Activated naive CD4-positive, alpha-beta T cell treated with anti-CD3 and anti-CD28 coated beads for 36 hours (primary cell): ENCODE measurements at regions of chr1 and their contacts with region 1.

Region 1: GRCh38 chr1:161098210-161099068 is at the start of gene KLHDC9:
- DNase-seq: peak; percentile 78
- H3K4me3 Mint-ChIP-seq: peak within 1 kb of the TSS; percentile 70
- H3K27ac Mint-ChIP-seq: peak within 1 kb of the TSS; percentile 54
- H3K4me1 Mint-ChIP-seq: peaks cover 39% of the 10 kb centered on the region
- H3K27me3 Mint-ChIP-seq: no peaks in the 10 kb centered on the region
- total RNA-seq, gene KLHDC9: 0.33 to 0.57 TPM

Region 2: DNA sequence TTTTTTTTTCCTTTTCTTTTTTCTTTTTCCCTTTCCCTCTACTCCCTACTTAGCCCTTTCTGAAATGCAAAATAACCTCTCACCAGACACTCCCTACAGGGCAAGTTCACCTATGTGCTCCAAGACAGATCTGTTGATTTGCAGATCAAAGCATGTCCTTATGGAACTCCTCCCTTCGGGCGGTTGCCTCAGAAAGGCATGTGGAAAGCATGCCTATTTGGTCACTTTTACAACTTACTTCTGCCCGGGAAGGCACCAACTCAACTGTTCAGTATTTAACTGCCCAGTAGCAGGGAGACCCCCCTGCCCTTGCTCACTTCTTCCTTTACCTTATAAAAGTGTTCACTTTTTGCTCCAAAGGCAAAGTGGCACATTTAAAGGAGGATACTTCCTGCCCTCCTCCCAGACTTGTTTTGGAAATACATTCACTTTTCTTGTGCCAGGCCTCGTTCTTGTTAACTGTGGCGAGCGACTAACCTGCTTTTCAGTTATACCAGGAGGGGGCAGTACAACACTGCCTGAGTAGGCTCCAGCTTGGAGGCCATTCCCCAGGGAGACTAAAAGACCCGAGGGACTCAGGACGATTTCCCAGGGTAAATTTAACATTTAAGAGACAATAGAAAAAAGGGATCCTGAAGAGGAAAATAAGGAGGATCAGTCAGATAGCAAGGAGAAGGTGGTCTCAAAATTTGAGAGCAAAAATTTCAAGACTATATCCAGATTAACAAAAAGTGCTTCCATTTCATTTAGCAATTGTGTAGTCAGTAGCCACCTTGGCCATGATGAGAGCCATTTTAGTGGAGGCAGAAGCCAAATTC is 371.7 kb before region 1 on chr1:
- CTCF ChIA-PET with region 1: interaction called, 3 read pairs
- intact Hi-C with region 1: loop called (anchors 5 kb)
- DNase-seq: peak; percentile 81
- H3K4me3 Mint-ChIP-seq: no peak overlapping the region
- H3K27ac Mint-ChIP-seq: no peak overlapping the region
- H3K4me1 Mint-ChIP-seq: peaks cover 34% of the 10 kb centered on the region
- H3K27me3 Mint-ChIP-seq: no peaks in the 10 kb centered on the region

Region 3: GRCh38 chr1:160997323-160998038 is 101.0 kb before region 1 on chr1:
- CTCF ChIA-PET with region 1: interaction called, 99 read pairs
- intact Hi-C with region 1: loop called (anchors 1 kb)
- DNase-seq: peak; percentile 77
- H3K4me3 Mint-ChIP-seq: no peak overlapping the region
- H3K27ac Mint-ChIP-seq: peak overlapping the region; percentile 1
- H3K4me1 Mint-ChIP-seq: peaks cover 6% of the 10 kb centered on the region
- H3K27me3 Mint-ChIP-seq: no peaks in the 10 kb centered on the region

Region 4: DNA sequence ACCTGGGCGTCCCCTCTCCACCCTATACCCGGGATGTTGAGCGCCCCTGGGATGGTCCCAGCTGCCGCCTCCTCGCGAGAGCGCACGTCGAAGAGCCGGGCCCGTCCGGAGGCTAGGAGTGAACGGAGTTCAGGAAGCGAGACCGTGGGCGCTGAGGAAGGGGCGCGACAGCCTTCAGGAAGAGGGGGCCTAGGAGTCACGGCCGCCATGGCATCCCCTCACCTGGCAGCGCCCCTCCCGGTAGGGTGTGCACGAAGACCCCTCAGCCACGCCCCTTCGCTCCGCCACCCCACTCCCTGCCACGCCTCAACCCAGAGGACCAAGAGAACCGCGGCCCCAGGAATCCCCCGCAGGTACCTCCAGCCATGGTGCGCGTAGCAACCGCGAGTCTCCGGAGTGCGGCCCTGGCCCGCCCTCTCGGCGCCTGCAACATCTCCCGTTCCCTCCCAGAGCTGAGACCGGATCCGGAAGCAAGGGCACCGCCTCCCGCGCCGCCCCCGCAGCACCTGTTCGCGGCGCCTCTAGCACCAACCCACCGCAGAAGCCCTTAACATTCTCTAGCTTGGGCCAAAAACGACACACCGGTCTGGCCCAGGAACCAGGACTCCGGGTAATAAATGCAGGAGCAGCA is 59.8 kb before region 1 on chr1 and contains the start of gene TSTD1:
- CTCF ChIA-PET with region 1: interaction called, 135 read pairs
- intact Hi-C with region 1: loop called (anchors 1 kb)
- DNase-seq: peak; percentile 92
- H3K4me3 Mint-ChIP-seq: peak within 1 kb of the TSS; percentile 88
- H3K27ac Mint-ChIP-seq: peak within 1 kb of the TSS; percentile 77
- H3K4me1 Mint-ChIP-seq: peaks cover 36% of the 10 kb centered on the region
- H3K27me3 Mint-ChIP-seq: no peaks in the 10 kb centered on the region
- total RNA-seq, gene TSTD1: 50.3 to 51.5 TPM

Region 5: GRCh38 chr1:161059293-161059692 is 39.1 kb before region 1 on chr1:
- CTCF ChIA-PET with region 1: interaction called, 17 read pairs
- intact Hi-C with region 1: loop called (anchors 5 kb)
- DNase-seq: no peak
- H3K4me3 Mint-ChIP-seq: no peak overlapping the region
- H3K27ac Mint-ChIP-seq: peak overlapping the region; percentile 87
- H3K4me1 Mint-ChIP-seq: peaks cover 53% of the 10 kb centered on the region
- H3K27me3 Mint-ChIP-seq: no peaks in the 10 kb centered on the region

Region 6: GRCh38 chr1:161139765-161140164 is 41.3 kb after region 1 on chr1:
- CTCF ChIA-PET with region 1: interaction called, 19 read pairs
- intact Hi-C with region 1: loop called (anchors 2 kb)
- DNase-seq: peak; percentile 71
- H3K4me3 Mint-ChIP-seq: no peak overlapping the region
- H3K27ac Mint-ChIP-seq: no peak overlapping the region
- H3K4me1 Mint-ChIP-seq: peaks cover 4% of the 10 kb centered on the region
- H3K27me3 Mint-ChIP-seq: no peaks in the 10 kb centered on the region

Region 7: DNA sequence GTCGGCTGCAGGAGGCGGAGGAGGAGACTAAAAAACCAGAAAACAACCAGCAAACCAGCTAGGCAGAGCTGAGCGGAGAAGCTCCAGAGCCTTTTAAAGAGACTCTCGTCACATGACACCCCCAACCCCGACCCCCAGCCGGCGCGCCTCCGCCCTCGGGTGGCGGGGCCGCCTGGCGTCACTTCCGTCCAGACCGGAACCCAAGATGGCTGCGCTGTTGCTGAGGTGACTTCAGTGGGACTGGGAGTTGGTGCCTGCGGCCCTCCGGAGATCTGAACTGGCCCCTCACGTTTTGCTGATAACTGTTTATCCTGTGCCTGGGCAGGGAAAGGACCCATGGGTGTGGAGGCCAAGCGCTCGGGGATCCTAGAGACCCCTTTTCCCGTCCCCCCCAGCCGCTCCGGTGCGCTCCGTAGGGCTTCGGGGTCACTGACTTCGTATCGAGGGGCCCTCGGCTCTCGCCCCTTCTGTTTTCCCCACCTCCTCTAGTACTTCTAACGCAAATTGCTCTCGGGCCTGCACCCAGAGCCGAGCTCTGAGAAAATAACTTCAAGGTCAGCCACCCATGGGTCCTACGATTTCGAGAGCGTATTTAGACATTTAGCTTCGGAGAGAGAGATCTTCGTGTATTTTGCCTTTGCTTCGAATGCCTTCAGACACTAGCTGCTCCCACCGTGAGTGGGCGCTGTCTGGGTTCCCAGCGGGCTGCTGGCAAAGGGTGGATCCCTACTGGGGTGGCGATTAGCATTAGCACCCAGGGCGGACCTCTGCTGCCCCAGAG is 216.0 kb after region 1 on chr1 and contains the start of gene SDHC:
- CTCF ChIA-PET with region 1: no interaction called
- intact Hi-C with region 1: no loop called
- DNase-seq: peak; percentile 89
- H3K4me3 Mint-ChIP-seq: peak within 1 kb of the TSS; percentile 97
- H3K27ac Mint-ChIP-seq: peak within 1 kb of the TSS; percentile 92
- H3K4me1 Mint-ChIP-seq: peaks cover 21% of the 10 kb centered on the region
- H3K27me3 Mint-ChIP-seq: no peaks in the 10 kb centered on the region
- total RNA-seq, gene SDHC: 201 TPM